Heart right ventricle (tissue), 16 donors: ENCODE measurements at regions of chr12 and their contacts with region 1.

Region 1: GRCh38 chr12:9741726-9742125 is 8.8 kb upstream of the CLECL1 start:
- DNase-seq: no peak
- ATAC-seq: no peak
- H3K4me3 ChIP-seq: no peak overlapping the region
- H3K27ac ChIP-seq: peak overlapping the region in 1 of 10 donors; percentile 79
- H3K4me1 ChIP-seq: peaks cover 0 to 47% (median 17%) of the 10 kb centered on the region in 9 donors
- H3K27me3 ChIP-seq: peaks cover 0 to 4% (median 0%) of the 10 kb centered on the region in 7 donors
- CTCF ChIP-seq: no peak

Region 2: GRCh38 chr12:9869307-9870161 is 127.8 kb after region 1 on chr12 and contains the start of gene CLEC2B:
- intact Hi-C with region 1: loop called in 2 of 10 experiments (anchors 5 kb)
- DNase-seq: peak in 1 of 2 donors; percentile 9
- ATAC-seq: peak in 7 of 8 donors; percentile 71 to 86 (median 76)
- H3K4me3 ChIP-seq: peak within 1 kb of the TSS; percentile 29 to 66 (median 51)
- H3K27ac ChIP-seq: peak within 1 kb of the TSS; percentile 67 to 96 (median 87)
- H3K4me1 ChIP-seq: peaks cover 0 to 22% (median 7%) of the 10 kb centered on the region in 9 donors
- H3K27me3 ChIP-seq: no peaks in the 10 kb centered on the region
- CTCF ChIP-seq: no peak
- total RNA-seq, gene CLEC2B: 2.6 to 13.9 (median 3.8) TPM

Region 3: GRCh38 chr12:10130042-10130441 is 388.3 kb after region 1 on chr12 and contains the start of gene CLEC7A:
- intact Hi-C with region 1: loop called in 2 of 10 experiments (anchors 5 to 10 kb)
- DNase-seq: no peak
- ATAC-seq: peak in 3 of 8 donors; percentile 44 to 51 (median 48)
- H3K4me3 ChIP-seq: peak within 1 kb of the TSS in 4 of 10 donors; percentile 2 to 54 (median 20)
- H3K27ac ChIP-seq: peak within 1 kb of the TSS in 5 of 10 donors; percentile 34 to 93 (median 62)
- H3K4me1 ChIP-seq: peaks cover 0 to 30% (median 0%) of the 10 kb centered on the region in 9 donors
- H3K27me3 ChIP-seq: no peaks in the 10 kb centered on the region
- CTCF ChIP-seq: no peak
- total RNA-seq, gene CLEC7A: 0.94 to 15.2 (median 1.8) TPM